AG04449 (cell line): ENCODE measurements at regions of chr13 and their contacts with region 1.

Region 1: GRCh38 chr13:50081679-50082425 is 66.6 kb downstream of the KCNRG start:
- DNase-seq: peak; percentile 91
- H3K4me3 ChIP-seq: peak overlapping the region; percentile 93
- CTCF ChIP-seq: no peak

Region 2: DNA sequence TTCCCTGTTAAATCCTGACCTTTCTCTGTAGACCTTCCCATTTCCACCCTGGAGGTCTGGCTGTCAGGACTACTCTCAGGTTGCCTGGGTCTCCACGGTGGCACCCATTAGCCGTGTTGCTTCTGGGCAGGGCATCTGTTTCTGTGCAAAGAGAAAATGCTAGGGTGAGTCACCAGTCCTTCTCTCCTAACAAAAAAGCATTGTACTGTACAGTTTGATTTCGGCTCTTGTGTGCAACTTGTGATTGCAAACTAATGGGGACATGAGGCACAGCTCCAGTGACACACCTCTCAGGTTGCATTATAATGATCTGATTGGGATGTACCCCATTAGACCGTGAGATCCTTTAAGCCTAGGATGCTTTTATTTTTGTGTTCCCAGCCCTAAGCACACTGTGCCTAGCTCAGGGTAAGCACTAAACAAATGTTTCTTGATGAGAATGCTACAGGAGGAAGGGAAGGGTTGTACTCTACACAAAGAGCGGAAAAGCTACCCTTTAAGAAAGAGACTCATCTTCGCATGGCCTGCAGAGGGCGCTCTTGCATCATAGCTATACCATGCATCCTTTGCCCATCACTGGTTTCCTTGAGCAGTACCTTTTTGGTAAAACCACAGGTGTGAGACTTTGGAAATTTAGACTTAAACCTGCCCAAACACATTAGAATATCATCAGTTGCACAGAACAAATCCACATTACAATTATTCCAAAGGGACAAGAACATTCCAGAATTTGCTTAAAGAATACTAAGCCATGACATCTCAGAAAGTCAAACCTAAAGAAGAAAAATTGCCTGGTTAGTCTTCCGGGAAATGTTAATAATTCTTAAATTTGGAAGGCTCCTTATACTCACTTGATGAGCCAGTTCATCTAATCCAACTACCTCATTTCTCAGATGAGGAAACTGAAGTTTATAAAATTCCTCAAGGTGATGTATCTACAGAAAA is 105.3 kb before region 1 on chr13:
- CTCF ChIA-PET with region 1: interaction called, 27 read pairs
- POLR2A ChIA-PET with region 1: no interaction called
- DNase-seq: no peak
- H3K4me3 ChIP-seq: no peak overlapping the region
- CTCF ChIP-seq: peak; percentile 83

Region 3: DNA sequence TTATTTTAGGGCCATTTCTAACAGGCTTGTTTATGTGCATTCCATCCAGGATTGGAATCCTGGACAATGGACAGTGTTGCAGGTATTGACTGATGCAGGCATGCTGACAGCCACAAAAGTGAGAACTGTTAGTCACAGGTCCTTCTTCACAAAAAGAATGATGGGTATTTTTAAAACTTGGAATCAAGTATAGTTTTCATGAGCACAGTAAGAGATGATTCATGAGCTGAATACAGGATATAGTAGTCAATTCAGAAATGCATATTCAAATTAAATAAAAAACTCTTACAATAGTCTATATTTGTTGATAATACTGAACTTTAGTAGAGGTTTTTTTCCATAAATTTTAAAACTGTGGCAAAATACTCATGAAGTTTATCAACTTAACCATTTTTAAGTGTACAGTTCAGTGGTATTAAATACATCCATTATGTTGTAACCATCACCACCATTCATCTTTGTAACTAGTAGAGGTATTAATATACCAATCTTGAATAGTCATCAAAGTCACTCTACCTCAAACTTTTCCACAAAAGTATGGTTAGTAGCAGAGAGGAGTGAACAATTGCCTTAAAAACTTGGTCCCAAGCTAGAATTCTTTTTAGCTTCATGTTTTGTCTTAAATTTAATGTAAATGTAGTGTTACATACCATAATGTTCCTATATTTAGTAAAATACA is 12.9 kb after region 1 on chr13:
- CTCF ChIA-PET with region 1: interaction called, 25 read pairs
- POLR2A ChIA-PET with region 1: no interaction called
- DNase-seq: no peak
- H3K4me3 ChIP-seq: no peak overlapping the region
- CTCF ChIP-seq: no peak

Region 4: GRCh38 chr13:50123862-50124536 is 42.1 kb after region 1 on chr13:
- CTCF ChIA-PET with region 1: interaction called, 8 read pairs
- POLR2A ChIA-PET with region 1: interaction called, 15 read pairs
- DNase-seq: peak; percentile 87
- H3K4me3 ChIP-seq: peak overlapping the region; percentile 96
- CTCF ChIP-seq: peak; percentile 25

Region 5: DNA sequence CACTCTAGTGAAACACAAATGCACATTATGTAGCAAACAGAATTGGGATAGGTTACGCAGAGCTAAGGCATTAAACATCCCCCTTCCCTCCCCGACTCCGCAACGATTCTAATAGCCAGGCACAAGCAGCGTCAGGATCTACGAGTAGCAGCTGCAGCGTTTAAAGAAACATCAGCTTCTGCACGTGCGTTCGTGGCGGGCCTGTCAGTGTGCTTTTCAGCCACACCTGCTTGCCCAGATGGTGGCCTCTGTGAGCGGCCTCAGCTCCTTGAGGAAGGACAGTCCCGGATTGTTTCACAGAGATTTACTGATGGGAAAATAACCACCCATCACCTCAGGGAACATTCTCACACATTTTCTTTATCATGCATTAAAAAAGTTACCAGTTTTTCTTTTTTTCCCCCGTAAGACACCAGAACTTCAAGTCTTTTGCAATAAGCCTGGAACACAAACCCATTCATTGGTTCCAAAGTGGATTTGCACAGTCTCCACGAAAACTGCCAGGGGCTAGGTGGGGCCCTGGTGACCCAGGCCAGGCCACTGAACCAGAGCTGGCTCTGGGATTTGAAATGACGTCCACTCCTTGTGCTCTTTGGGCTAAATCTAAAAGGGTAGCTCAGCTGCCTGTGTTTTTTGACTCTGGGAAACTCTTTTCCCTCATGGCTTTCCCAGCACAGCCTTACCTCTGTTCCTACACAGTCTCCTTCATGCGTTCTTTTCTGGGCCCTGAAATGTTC is 258.9 kb after region 1 on chr13:
- CTCF ChIA-PET with region 1: no interaction called
- POLR2A ChIA-PET with region 1: no interaction called
- DNase-seq: no peak
- H3K4me3 ChIP-seq: no peak overlapping the region
- CTCF ChIP-seq: no peak

Region 6: DNA sequence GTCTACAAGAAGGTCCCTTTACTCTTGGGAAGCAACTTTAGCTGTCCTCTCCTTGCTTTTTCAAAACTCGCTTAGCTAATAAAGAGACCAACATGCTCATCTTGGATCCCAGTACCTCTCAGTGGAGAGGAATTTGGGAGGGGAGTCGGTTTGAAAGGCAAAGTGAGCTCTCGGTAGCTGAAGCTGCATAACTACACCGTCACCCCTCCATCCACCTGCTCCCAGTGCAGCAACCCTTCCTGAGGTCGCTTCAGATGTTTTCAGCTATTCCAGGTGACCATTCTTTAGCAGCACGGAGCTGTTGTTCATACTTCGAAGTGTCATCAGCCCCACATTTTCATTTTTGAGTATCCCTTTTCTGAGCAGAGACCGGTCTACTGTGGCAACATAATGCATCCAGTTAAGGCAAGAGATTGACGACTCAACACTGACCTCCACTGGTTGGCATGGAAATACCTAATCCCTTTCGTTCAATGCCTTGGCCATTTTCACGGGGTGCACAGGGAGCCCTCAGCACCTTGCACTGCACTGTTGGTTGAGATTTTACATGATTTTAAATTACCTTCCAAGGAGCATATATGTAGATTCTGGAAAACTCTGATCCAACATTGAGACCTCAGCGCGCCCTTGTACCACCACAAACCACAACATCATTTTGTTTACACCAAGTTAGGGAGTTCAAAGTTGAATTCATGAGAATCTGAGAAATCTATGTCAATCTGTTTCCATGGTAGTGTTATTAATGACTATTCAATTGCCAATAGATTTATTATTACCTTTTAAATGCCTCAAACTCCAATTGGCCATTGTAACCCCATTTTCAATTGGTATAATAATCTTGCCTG is 719.5 kb after region 1 on chr13:
- CTCF ChIA-PET with region 1: interaction called, 11 read pairs
- POLR2A ChIA-PET with region 1: no interaction called
- DNase-seq: peak; percentile 9
- H3K4me3 ChIP-seq: no peak overlapping the region
- CTCF ChIP-seq: peak; percentile 70

Region 7: GRCh38 chr13:51070005-51070649 is 988.3 kb after region 1 on chr13:
- CTCF ChIA-PET with region 1: interaction called, 28 read pairs
- POLR2A ChIA-PET with region 1: no interaction called
- DNase-seq: peak; percentile 12
- H3K4me3 ChIP-seq: no peak overlapping the region
- CTCF ChIP-seq: peak; percentile 90